ENCODE measurements at regions of chr5 and their contacts with region 1.

Region 1: DNA sequence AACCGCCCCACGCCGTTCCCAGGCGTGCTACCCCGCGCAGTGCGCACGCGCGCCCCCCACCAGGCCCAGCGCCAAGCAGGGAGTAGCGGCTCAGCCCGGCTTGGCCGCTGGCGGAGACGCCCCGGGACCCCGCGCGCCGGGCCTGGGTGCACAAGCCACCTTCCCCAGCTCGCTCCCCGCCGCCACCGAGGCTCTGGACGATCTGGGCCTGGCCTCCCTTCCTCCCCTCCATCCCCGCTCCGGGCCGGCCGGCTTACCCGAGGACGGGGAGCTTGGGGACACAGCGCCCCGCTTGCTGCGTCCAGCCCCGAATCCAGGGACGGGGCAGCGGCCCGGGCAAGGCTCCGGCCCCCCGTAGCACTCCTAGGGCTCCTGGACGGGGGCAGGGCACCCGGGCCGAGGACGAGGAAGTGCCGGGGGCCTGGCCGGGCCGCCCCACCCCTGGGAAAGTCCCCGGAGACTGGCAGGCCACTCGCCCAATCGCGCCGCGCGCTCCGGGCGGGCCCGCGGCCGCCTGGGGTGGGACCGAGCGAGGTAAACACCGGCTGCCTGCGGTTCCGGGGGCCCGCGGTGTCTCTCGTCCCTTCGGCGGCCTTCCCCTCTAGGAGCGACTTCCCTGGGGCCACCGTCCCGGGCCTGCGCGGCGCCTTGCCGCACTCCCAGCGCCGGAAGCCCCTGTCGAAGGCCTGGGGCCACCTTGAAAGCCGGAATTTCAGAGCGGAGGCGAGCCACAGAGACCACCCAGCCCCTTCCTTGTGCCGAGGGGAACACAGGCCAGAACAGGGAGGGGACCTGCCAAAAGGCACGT is at the start of gene TNIP1:
- DNase-seq: peak; percentile 99
- H3K4me3 Mint-ChIP-seq: peak within 1 kb of the TSS; percentile 86
- H3K27ac Mint-ChIP-seq: peak within 1 kb of the TSS; percentile 94
- H3K4me1 Mint-ChIP-seq: peaks cover 77% of the 10 kb centered on the region
- H3K27me3 Mint-ChIP-seq: no peaks in the 10 kb centered on the region
- total RNA-seq, gene TNIP1: 345 and 360 TPM in 2 replicates

Region 2: DNA sequence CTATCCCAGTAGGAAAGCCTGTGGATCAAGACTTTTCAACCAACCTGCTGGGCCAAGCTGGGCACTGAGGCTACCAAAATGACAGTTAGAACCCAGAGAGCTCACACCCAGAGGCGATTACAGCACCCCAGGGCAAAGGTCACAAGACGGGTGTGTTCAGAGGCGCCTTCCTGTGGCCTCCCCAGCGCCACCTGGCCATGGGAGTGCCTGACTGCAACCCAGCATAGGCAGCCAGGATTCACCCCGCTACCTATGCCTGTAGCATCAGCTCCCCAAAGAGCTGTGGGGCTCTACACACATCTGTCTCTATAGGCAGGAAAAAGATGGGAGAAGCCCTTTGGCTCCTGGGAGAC is 958.7 kb before region 1 on chr5:
- intact Hi-C with region 1: no loop called
- DNase-seq: peak; percentile 76
- H3K4me3 Mint-ChIP-seq: no peak overlapping the region
- H3K27ac Mint-ChIP-seq: no peak overlapping the region
- H3K4me1 Mint-ChIP-seq: peaks cover 2% of the 10 kb centered on the region
- H3K27me3 Mint-ChIP-seq: no peaks in the 10 kb centered on the region

Region 3: GRCh38 chr5:150700594-150701293 is 380.1 kb before region 1 on chr5 and contains the start of gene RBM22:
- intact Hi-C with region 1: loop called (anchors 5 kb)
- DNase-seq: peak; percentile 98
- H3K4me3 Mint-ChIP-seq: peak within 1 kb of the TSS; percentile 53
- H3K27ac Mint-ChIP-seq: no peak within 1 kb of the TSS
- H3K4me1 Mint-ChIP-seq: peaks cover 12% of the 10 kb centered on the region
- H3K27me3 Mint-ChIP-seq: no peaks in the 10 kb centered on the region
- total RNA-seq, gene RBM22: 69.6 and 78.4 TPM in 2 replicates

Region 4: GRCh38 chr5:151068433-151069197 is 12.2 kb before region 1 on chr5:
- intact Hi-C with region 1: loop called (anchors 1 kb)
- DNase-seq: no peak
- H3K4me3 Mint-ChIP-seq: peak overlapping the region; percentile 66
- H3K27ac Mint-ChIP-seq: peak overlapping the region; percentile 93
- H3K4me1 Mint-ChIP-seq: peaks cover 78% of the 10 kb centered on the region
- H3K27me3 Mint-ChIP-seq: no peaks in the 10 kb centered on the region

Region 5: DNA sequence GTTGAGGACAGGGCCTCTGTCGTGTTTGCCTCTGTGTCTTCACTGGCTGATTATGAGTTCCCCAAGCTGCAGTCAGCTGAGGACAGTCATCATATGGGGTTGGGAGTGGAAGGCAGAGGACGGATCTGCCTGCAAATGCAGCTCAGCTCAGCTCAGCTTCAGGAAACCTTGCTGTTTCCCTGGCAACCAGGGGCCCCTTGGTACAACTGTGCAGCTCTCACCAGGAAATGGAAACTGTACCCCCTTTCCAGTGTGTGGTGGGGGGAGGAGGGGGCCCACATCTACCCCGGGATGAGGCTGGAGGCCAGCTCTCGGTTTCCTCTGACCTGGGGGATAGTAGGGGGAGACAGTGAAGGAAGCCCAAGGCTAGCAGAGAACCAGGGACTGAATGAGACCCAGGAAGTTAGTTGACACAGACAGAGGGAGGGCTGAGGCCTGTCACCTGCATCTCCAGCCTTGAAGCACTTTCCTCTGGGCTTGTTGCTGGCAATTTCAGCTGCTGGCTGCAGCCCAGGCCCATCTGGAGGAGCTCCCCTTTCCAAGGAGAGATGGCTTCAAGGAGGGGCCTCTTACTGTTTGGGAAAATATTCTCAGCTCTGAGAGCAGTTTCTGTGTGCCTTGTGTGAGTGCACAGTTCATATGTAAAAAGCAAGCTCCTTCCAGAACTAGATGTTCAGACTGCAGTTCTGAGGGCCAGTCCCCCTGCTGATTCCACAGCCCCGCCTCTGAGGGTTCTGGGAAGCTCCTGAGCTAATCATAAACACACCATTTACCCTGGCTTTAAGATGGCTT is 69.8 kb after region 1 on chr5:
- intact Hi-C with region 1: loop called (anchors 1 kb)
- DNase-seq: peak; percentile 93
- H3K4me3 Mint-ChIP-seq: peak overlapping the region; percentile 66
- H3K27ac Mint-ChIP-seq: peak overlapping the region; percentile 88
- H3K4me1 Mint-ChIP-seq: peaks cover 81% of the 10 kb centered on the region
- H3K27me3 Mint-ChIP-seq: no peaks in the 10 kb centered on the region

Region 6: GRCh38 chr5:151771259-151772028 is 690.6 kb after region 1 on chr5 and contains the start of gene G3BP1:
- intact Hi-C with region 1: loop called (anchors 5 kb)
- DNase-seq: peak; percentile 100
- H3K4me3 Mint-ChIP-seq: peak within 1 kb of the TSS; percentile 98
- H3K27ac Mint-ChIP-seq: peak within 1 kb of the TSS; percentile 92
- H3K4me1 Mint-ChIP-seq: peaks cover 30% of the 10 kb centered on the region
- H3K27me3 Mint-ChIP-seq: no peaks in the 10 kb centered on the region
- total RNA-seq, gene G3BP1: 362 and 367 TPM in 2 replicates